Heart right ventricle (tissue), 16 donors: ENCODE measurements at regions of chr16 and their contacts with region 1.

Region 1: DNA sequence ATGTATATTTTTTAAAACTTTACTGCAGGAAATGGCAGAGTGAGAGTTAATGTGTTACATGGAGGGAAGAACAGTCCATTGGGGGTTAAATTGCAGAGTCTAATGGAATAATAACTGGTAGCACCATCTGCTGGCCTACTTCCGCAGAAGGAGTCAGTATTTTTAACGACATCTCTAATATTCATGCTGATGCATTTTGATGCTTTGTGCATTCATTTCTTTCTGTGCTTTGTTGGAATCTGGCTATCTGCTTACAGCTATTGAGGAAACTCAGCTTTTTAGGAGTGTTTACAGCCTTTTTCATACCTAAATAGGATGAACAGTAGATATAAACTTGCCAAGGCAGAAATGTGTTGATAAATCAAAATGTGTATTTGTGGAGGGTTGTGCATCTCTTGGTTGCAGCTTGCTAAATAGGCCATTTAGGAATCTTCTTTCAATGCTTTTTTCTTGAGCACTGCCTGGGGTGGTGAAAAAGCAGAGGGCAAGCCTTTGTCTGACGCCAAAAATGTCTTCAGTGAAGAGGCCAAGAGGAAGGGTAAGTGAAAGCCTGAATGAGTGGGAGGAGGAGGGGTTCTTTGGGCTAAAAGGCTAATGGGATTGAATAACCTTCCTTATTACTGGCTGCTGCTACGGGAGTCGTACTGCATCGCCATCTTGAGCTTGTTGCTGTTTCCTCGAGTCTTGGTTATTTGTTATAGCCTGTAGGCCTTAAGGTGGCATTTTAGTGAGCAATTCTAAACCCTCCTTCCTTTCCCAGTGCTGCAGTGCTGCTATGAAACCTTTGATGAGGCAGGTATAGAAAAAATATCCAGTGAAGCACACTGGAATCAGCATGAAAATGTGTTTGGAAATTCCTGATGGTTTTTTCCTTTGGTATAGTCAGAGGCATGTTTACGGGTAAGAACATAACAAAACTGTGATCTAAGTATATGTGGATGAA is 153.3 kb downstream of the CHD9 start:
- DNase-seq: peak in 1 of 2 donors; percentile 64
- ATAC-seq: peak; percentile 94 to 96 (median 96)
- H3K4me3 ChIP-seq: peak overlapping the region; percentile 5 to 64 (median 53)
- H3K27ac ChIP-seq: peak overlapping the region; percentile 26 to 94 (median 86)
- H3K4me1 ChIP-seq: peaks cover 0 to 65% (median 56%) of the 10 kb centered on the region in 9 donors
- H3K27me3 ChIP-seq: no peaks in the 10 kb centered on the region
- CTCF ChIP-seq: peak; percentile 14 to 80 (median 60)

Region 2: DNA sequence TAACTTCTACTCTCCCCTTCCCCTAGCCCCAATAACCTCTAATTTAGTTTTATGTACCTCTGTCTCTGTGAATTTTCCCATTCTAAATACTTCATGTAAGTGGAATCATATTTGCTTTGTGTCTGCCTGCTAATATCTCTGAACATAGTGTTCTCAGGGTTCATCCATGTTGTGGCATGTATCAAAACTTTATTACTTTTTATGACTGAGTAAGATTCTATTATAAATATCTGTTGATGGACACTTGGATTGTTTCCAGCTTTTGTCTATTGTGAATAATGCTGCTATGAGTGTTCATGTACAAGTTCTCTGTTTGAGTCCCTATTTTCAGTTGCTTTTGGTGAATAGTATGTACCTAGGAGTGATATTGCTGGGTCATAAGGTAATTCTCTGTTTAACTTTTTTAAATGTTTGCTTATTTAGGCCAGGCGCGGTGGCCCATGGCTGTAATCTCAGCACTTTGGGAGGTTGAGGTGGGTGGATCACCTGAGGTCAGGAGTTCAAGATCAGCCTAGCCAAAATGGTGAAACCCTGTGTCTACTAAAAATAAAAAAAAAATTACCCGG is 60.5 kb before region 1 on chr16:
- intact Hi-C with region 1: no loop called
- DNase-seq: no peak
- ATAC-seq: peak in 1 of 8 donors; percentile 16
- H3K4me3 ChIP-seq: no peak overlapping the region
- H3K27ac ChIP-seq: no peak overlapping the region
- H3K4me1 ChIP-seq: peaks cover 0 to 20% (median 9%) of the 10 kb centered on the region in 9 donors
- H3K27me3 ChIP-seq: no peaks in the 10 kb centered on the region
- CTCF ChIP-seq: no peak

Region 3: GRCh38 chr16:53159781-53160436 is 48.2 kb before region 1 on chr16:
- intact Hi-C with region 1: loop called in 2 of 10 experiments (anchors 5 kb)
- DNase-seq: peak in 1 of 2 donors; percentile 32
- ATAC-seq: peak in 6 of 8 donors; percentile 44 to 89 (median 77)
- H3K4me3 ChIP-seq: no peak overlapping the region
- H3K27ac ChIP-seq: no peak overlapping the region
- H3K4me1 ChIP-seq: peaks cover 0 to 24% (median 0%) of the 10 kb centered on the region in 9 donors
- H3K27me3 ChIP-seq: no peaks in the 10 kb centered on the region
- CTCF ChIP-seq: peak; percentile 43 to 85 (median 74)

Region 4: GRCh38 chr16:53166099-53166498 is 42.0 kb before region 1 on chr16:
- intact Hi-C with region 1: loop called in 2 of 10 experiments (anchors 5 kb)
- DNase-seq: no peak
- ATAC-seq: no peak
- H3K4me3 ChIP-seq: no peak overlapping the region
- H3K27ac ChIP-seq: no peak overlapping the region
- H3K4me1 ChIP-seq: peaks cover 0 to 31% (median 8%) of the 10 kb centered on the region in 9 donors
- H3K27me3 ChIP-seq: no peaks in the 10 kb centered on the region
- CTCF ChIP-seq: no peak

Region 5: DNA sequence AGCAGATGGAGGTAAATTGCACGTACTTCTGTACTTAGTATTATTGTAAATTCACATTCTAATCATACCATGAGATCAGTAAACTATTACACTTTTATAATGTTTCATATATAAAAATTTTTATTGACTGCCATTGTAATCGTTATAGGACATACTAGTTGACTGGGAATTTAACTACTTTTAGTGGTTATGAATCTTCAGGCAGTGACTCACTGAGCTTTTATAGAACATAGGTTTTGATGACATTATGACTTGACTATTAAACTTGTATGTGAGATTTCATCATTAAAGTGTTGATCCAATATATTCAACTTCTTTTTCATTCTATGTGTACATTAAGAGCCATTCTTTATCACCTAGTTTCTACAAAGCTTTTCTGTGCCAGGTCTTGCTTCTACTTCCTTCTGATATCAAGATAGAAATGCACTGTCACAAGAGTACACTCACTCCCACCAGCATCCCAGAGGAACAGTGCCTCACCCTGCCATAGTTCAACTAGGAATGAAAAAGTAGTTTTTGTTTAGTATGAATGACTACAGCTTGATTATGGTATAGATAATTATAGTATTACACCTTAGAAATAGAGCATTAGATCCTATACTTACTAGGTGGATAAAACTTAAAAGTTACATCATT is 83.8 kb after region 1 on chr16:
- intact Hi-C with region 1: no loop called
- DNase-seq: no peak
- ATAC-seq: no peak
- H3K4me3 ChIP-seq: no peak overlapping the region
- H3K27ac ChIP-seq: no peak overlapping the region
- H3K4me1 ChIP-seq: no peaks in the 10 kb centered on the region
- H3K27me3 ChIP-seq: no peaks in the 10 kb centered on the region
- CTCF ChIP-seq: no peak

Region 6: DNA sequence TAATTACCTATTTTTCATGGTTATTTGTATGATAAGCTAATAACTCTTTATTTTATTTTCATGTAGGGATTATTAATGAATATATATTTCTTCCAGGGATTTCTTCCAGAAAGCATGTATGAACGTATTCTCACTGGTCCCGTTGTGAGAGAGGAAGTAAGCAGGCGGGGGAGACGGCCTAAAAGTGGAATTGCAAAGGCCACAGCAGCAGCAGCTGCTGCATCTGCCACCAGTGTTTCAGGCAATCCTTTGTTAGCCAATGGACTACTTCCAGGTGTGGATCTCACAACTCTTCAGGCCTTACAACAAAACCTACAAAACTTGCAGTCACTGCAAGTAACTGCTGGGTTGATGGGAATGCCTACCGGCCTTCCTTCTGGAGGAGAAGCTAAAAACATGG is 115.8 kb after region 1 on chr16:
- intact Hi-C with region 1: no loop called
- DNase-seq: no peak
- ATAC-seq: no peak
- H3K4me3 ChIP-seq: no peak overlapping the region
- H3K27ac ChIP-seq: no peak overlapping the region
- H3K4me1 ChIP-seq: no peaks in the 10 kb centered on the region
- H3K27me3 ChIP-seq: no peaks in the 10 kb centered on the region
- CTCF ChIP-seq: no peak